Body of pancreas (tissue), 4 donors: ENCODE measurements at regions of chr10 and their contacts with region 1.

Region 1: GRCh38 chr10:120221873-120222485 is 235.0 kb upstream of the PLPP4 start:
- DNase-seq: peak; percentile 48 to 61 (median 52)
- ATAC-seq: peak; percentile 21
- H3K4me3 ChIP-seq: no peak overlapping the region
- H3K27ac ChIP-seq: no peak overlapping the region
- H3K4me1 ChIP-seq: no peaks in the 10 kb centered on the region
- H3K27me3 ChIP-seq: no peaks in the 10 kb centered on the region
- CTCF ChIP-seq: peak; percentile 42 to 74 (median 63)
- POLR2A ChIP-seq: no peak

Region 2: GRCh38 chr10:120336911-120337540 is 115.0 kb after region 1 on chr10:
- intact Hi-C with region 1: loop called (anchors 10 kb)
- DNase-seq: peak; percentile 55 to 78 (median 66)
- ATAC-seq: no peak
- H3K4me3 ChIP-seq: no peak overlapping the region
- H3K27ac ChIP-seq: no peak overlapping the region
- H3K4me1 ChIP-seq: no peaks in the 10 kb centered on the region
- H3K27me3 ChIP-seq: no peaks in the 10 kb centered on the region
- CTCF ChIP-seq: peak; percentile 53 to 85 (median 71)
- POLR2A ChIP-seq: no peak